AG04450 (cell line): ENCODE measurements at regions of chr16 and their contacts with region 1.

Region 1: DNA sequence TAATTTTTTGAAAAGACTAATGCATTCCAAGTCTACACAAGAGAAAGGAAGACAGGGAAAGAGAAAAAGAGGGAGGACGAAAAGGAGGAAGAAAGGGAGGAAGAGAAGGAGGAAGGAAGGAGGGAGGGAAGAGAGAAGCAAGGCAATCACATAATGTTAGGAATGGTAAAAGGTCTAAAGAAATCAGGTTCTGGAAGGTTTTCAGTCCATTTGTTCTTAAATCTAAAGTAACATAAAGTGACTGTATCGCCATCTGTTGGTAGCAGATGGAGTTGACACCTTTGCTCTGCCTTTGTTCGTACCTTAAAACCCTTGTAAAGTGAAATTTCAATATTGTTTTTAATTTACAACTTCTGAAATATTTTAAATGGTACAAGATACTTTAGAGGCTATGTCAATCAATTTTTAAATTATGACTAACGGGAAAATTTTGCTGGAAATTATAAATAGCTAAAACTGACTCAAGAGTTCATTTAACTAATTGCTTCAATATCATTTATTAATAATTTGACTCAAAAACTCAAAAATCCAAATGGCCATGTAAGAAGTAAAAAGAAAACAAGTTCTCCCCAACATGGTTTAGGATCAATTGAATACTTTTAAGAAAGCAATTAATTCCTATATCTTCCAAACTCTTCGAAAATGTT is 20.4 kb upstream of the CDYL2 start:
- DNase-seq: peak; percentile 38
- H3K4me3 ChIP-seq: no peak overlapping the region
- H3K27ac ChIP-seq: no peak overlapping the region
- H3K27me3 ChIP-seq: no peaks in the 10 kb centered on the region
- CTCF ChIP-seq: peak; percentile 80

Region 2: DNA sequence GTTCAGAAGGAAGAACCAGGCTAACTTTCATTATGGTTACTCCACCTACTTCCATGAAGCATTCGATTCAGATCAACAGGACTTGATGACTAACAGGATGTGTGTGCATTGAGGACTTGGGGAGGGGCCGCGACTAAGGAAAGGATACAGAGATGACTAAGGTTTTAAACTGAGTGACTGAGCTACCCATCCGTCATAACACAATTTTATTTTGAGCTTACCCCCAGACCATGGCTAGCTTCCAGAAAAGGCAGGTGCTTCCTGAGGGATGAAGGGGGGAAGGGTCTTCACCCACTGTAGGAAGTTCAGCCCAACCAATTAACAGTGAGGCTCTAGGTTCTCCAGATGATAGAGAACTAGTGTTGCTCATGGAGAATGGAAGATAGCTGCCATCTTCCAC is 17.9 kb before region 1 on chr16:
- CTCF ChIA-PET with region 1: interaction called, 21 read pairs
- POLR2A ChIA-PET with region 1: no interaction called
- DNase-seq: peak; percentile 11
- H3K4me3 ChIP-seq: no peak overlapping the region
- H3K27ac ChIP-seq: no peak overlapping the region
- H3K27me3 ChIP-seq: no peaks in the 10 kb centered on the region
- CTCF ChIP-seq: no peak

Region 3: DNA sequence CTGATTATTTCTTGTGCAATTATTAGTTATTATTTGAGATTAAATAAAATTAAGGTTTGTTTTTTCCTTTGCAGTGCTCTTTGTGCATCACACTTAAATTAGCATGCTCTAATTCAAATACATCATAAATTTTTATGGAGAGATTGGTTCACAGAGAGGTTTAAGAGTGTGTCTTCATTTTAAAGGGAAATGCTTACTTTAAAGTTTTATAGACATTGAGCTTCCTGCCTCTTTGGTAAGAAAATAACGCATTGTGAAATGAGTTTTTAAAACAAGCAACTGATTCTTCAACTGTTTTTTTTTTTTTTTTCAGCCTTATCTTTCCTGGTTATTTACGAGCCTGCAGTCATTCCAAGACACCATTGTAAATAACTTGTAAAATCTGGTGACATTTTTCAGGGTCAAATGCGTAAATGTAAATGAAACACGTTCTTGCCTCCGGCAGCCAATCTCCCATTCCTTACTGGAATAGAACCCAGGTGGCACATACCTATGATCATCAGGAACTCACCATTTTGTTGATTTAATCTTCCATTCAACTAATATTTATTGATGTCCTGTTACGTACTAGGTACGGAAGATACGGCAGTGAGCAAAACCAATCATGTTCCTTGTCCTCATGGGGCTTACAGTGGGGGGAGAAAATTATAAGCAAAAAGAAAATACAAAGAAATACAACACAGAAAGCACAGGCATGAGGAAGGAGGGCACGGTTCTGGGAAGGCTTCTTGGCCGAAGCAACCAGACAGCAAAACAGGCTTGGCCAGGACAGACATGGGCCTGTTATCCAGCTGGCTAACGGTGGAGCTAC is 12.8 kb after region 1 on chr16:
- CTCF ChIA-PET with region 1: interaction called, 14 read pairs
- POLR2A ChIA-PET with region 1: no interaction called
- DNase-seq: no peak
- H3K4me3 ChIP-seq: no peak overlapping the region
- H3K27ac ChIP-seq: no peak overlapping the region
- H3K27me3 ChIP-seq: peaks cover 5% of the 10 kb centered on the region
- CTCF ChIP-seq: no peak